GM12878 (cell line): ENCODE measurements at regions of chr13 and their contacts with region 1.

Region 1: GRCh38 chr13:95289020-95289444 is 12.2 kb downstream of the ABCC4 start:
- DNase-seq: no peak
- ATAC-seq: no peak
- H3K4me3 ChIP-seq: no peak overlapping the region
- H3K27ac ChIP-seq: no peak overlapping the region
- H3K4me1 ChIP-seq: peaks cover 17% of the 10 kb centered on the region
- H3K27me3 ChIP-seq: no peaks in the 10 kb centered on the region
- CTCF ChIP-seq: no peak
- EP300 ChIP-seq: no peak
- POLR2A ChIP-seq: no peak
- RAD21 ChIP-seq: no peak

Region 2: GRCh38 chr13:95216182-95216581 is 72.8 kb before region 1 on chr13:
- CTCF ChIA-PET with region 1: no interaction called
- POLR2A ChIA-PET with region 1: no interaction called
- RAD21 ChIA-PET with region 1: no interaction called
- SMC1A ChIA-PET with region 1: no interaction called
- in situ Hi-C with region 1: no loop called
- intact Hi-C with region 1: no loop called
- DNase-seq: no peak
- ATAC-seq: no peak
- H3K4me3 ChIP-seq: no peak overlapping the region
- H3K27ac ChIP-seq: no peak overlapping the region
- H3K4me1 ChIP-seq: no peaks in the 10 kb centered on the region
- H3K27me3 ChIP-seq: no peaks in the 10 kb centered on the region
- CTCF ChIP-seq: no peak
- EP300 ChIP-seq: no peak
- POLR2A ChIP-seq: no peak
- RAD21 ChIP-seq: no peak

Region 3: GRCh38 chr13:95269756-95270155 is 19.3 kb before region 1 on chr13:
- CTCF ChIA-PET with region 1: no interaction called
- POLR2A ChIA-PET with region 1: no interaction called
- RAD21 ChIA-PET with region 1: no interaction called
- SMC1A ChIA-PET with region 1: no interaction called
- in situ Hi-C with region 1: no loop called
- intact Hi-C with region 1: no loop called
- DNase-seq: no peak
- ATAC-seq: no peak
- H3K4me3 ChIP-seq: no peak overlapping the region
- H3K27ac ChIP-seq: peak overlapping the region; percentile 15; the same call in 1 of the 2 replicates
- H3K4me1 ChIP-seq: peaks cover 10% of the 10 kb centered on the region
- H3K27me3 ChIP-seq: no peaks in the 10 kb centered on the region
- CTCF ChIP-seq: no peak
- EP300 ChIP-seq: no peak
- POLR2A ChIP-seq: no peak
- RAD21 ChIP-seq: no peak

Region 4: DNA sequence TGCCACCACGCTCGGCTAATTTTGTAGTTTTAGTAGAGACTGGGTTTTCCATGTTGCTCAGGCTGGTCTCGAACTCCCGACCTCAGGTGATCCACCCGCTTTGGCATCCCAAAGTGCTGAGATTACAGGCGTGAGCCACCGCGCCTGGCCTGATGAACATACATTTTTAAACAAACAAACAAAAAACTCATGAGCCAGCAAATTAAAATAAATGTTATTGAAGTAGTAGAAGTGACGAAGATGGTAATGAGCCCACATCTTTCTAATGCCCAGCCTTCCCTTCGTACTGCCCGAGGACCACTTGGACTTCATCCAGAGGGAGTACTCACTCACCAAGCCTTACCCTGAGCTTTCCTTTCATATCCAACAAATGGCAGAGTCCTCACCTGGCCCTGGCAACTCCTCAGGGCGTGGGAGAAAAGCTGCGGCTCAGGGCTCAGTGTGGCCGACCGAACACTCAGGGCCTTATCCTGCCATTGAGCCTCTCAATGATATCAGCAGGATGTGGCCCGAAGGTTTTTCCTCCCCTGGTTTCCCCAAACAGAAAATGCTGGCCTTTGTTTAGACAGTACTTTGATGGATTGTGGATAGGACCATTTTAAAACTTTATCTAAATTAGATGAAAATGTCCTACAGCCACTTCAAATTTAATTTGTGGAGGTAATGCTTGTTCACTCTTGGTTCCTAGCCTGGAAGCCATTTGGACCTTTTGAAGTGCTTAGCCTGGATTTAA is 35.1 kb after region 1 on chr13:
- CTCF ChIA-PET with region 1: no interaction called
- POLR2A ChIA-PET with region 1: no interaction called
- RAD21 ChIA-PET with region 1: no interaction called
- SMC1A ChIA-PET with region 1: no interaction called
- in situ Hi-C with region 1: no loop called
- intact Hi-C with region 1: no loop called
- DNase-seq: no peak
- ATAC-seq: no peak
- H3K4me3 ChIP-seq: no peak overlapping the region
- H3K27ac ChIP-seq: no peak overlapping the region
- H3K4me1 ChIP-seq: no peaks in the 10 kb centered on the region
- H3K27me3 ChIP-seq: no peaks in the 10 kb centered on the region
- CTCF ChIP-seq: no peak
- EP300 ChIP-seq: no peak
- POLR2A ChIP-seq: no peak
- RAD21 ChIP-seq: no peak

Region 5: GRCh38 chr13:95480131-95480545 is 191.1 kb after region 1 on chr13:
- CTCF ChIA-PET with region 1: no interaction called
- POLR2A ChIA-PET with region 1: no interaction called
- RAD21 ChIA-PET with region 1: no interaction called
- SMC1A ChIA-PET with region 1: no interaction called
- in situ Hi-C with region 1: no loop called
- intact Hi-C with region 1: loop called (anchors 5 kb)
- DNase-seq: peak; percentile 71
- ATAC-seq: peak; percentile 75
- H3K4me3 ChIP-seq: no peak overlapping the region
- H3K27ac ChIP-seq: peak overlapping the region; percentile 54
- H3K4me1 ChIP-seq: peaks cover 21% of the 10 kb centered on the region
- H3K27me3 ChIP-seq: no peaks in the 10 kb centered on the region
- CTCF ChIP-seq: no peak
- EP300 ChIP-seq: no peak
- POLR2A ChIP-seq: no peak
- RAD21 ChIP-seq: no peak

Region 6: GRCh38 chr13:96525715-96526114 is 1236.7 kb after region 1 on chr13:
- CTCF ChIA-PET with region 1: no interaction called
- POLR2A ChIA-PET with region 1: no interaction called
- RAD21 ChIA-PET with region 1: no interaction called
- SMC1A ChIA-PET with region 1: no interaction called
- in situ Hi-C with region 1: no loop called
- intact Hi-C with region 1: no loop called
- DNase-seq: no peak
- ATAC-seq: no peak
- H3K4me3 ChIP-seq: no peak overlapping the region
- H3K27ac ChIP-seq: no peak overlapping the region
- H3K4me1 ChIP-seq: no peaks in the 10 kb centered on the region
- H3K27me3 ChIP-seq: no peaks in the 10 kb centered on the region
- CTCF ChIP-seq: no peak
- EP300 ChIP-seq: no peak
- POLR2A ChIP-seq: no peak
- RAD21 ChIP-seq: no peak